CD8-positive, alpha-beta memory T cell (primary cell): ENCODE measurements at regions of chr10 and their contacts with region 1.

Region 1: DNA sequence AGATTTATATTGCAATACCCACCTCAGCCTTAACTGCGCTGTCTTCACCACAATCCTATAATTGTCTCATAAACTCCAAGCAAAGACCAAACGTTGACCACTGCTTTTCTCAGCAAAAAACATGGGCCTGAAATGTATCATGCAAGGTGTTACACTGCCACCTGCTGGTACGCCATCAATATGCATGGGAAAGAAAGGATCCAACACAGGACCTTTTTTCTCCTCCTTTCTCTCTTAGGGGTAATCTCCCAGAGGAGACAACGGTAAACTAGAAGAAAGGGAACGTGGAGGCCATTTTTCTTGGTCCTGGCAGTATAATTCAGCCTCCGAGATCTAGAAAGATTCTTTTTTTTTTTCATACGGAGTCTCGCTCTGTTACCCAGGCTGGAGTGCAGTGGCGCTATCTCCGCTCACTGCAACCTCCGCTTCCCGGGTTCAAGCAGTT is 79.1 kb upstream of the MPP7 start:
- DNase-seq: peak; percentile 74 to 88 (median 78)
- H3K4me3 ChIP-seq: no peak overlapping the region
- H3K4me3 Mint-ChIP-seq: no peak overlapping the region
- H3K27ac ChIP-seq: no peak overlapping the region
- H3K27ac Mint-ChIP-seq: peak overlapping the region in 3 of 8 donors; percentile 15 to 41 (median 20)
- H3K4me1 ChIP-seq: peaks cover 16% of the 10 kb centered on the region
- H3K4me1 Mint-ChIP-seq: peaks cover 7 to 24% (median 20%) of the 10 kb centered on the region in 3 donors
- H3K27me3 ChIP-seq: no peaks in the 10 kb centered on the region
- H3K27me3 Mint-ChIP-seq: peaks cover 6 to 13% of the 10 kb centered on the region in 2 donors

Region 2: GRCh38 chr10:28250782-28251181 is 131.1 kb before region 1 on chr10:
- CTCF ChIA-PET with region 1: interaction called, 21 read pairs
- POLR2A ChIA-PET with region 1: no interaction called
- DNase-seq: peak in 2 of 5 donors; percentile 6 to 24
- H3K4me3 ChIP-seq: no peak overlapping the region
- H3K4me3 Mint-ChIP-seq: no peak overlapping the region
- H3K27ac ChIP-seq: no peak overlapping the region
- H3K27ac Mint-ChIP-seq: no peak overlapping the region
- H3K4me1 ChIP-seq: no peaks in the 10 kb centered on the region
- H3K4me1 Mint-ChIP-seq: peaks cover 10 to 32% (median 24%) of the 10 kb centered on the region in 3 donors
- H3K27me3 ChIP-seq: no peaks in the 10 kb centered on the region
- H3K27me3 Mint-ChIP-seq: no peaks in the 10 kb centered on the region

Region 3: GRCh38 chr10:28293241-28294154 is 88.4 kb before region 1 on chr10:
- CTCF ChIA-PET with region 1: interaction called, 23 read pairs
- POLR2A ChIA-PET with region 1: no interaction called
- DNase-seq: no peak
- H3K4me3 ChIP-seq: no peak overlapping the region
- H3K4me3 Mint-ChIP-seq: peak overlapping the region in 1 of 7 donors; percentile 2
- H3K27ac ChIP-seq: no peak overlapping the region
- H3K27ac Mint-ChIP-seq: no peak overlapping the region
- H3K4me1 ChIP-seq: peaks cover 29% of the 10 kb centered on the region
- H3K4me1 Mint-ChIP-seq: peaks cover 37 to 71% (median 64%) of the 10 kb centered on the region in 3 donors
- H3K27me3 ChIP-seq: no peaks in the 10 kb centered on the region
- H3K27me3 Mint-ChIP-seq: no peaks in the 10 kb centered on the region

Region 4: DNA sequence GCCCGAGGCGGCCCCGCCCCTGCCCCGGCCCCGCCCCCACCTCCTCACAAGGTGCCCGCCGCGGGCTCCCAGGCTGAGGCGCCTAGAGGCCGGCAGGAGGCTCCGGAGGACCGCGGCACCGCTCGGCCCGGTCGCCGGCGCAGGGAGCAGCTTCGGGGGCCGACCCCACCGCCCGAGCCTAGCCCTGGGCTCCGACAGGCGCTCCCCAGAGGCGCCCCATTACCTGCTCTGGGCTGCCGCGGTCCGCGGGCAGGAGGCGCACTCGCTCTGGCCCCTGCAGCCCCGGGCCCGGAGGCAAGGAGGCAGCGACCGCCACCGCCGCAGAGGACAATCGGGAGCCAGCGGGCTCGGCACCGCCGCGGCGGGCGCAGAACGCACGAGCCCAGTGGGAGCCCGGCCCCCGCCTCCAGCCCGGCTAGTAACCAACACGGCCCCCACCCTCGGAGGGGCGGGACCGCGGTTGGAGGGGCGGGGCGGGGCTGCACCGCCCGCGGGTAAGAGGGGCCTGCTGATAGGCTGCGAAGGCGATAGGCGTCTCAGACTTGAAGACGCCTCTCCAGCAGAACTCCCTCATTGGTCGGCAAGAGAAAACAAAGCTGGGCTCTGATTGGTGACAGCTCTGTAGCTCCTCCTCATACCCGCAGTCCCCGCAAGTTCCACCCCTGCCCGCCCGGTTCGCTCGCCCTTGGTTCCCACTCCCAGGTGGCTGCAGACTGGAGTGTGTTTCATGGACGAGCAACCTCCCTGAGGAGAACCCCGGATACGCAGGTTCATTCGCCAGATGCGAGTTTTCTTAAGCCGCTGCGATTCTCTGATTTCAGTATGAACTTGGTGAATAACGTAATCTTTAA is 79.1 kb before region 1 on chr10 and contains the start of gene MPP7:
- CTCF ChIA-PET with region 1: interaction called, 121 read pairs
- POLR2A ChIA-PET with region 1: interaction called, 17 read pairs
- DNase-seq: peak; percentile 94 to 98 (median 97)
- H3K4me3 ChIP-seq: peak within 1 kb of the TSS; percentile 89
- H3K4me3 Mint-ChIP-seq: peak within 1 kb of the TSS; percentile 92 to 97 (median 95)
- H3K27ac ChIP-seq: peak within 1 kb of the TSS; percentile 60
- H3K27ac Mint-ChIP-seq: peak within 1 kb of the TSS; percentile 55 to 95 (median 90)
- H3K4me1 ChIP-seq: peaks cover 40% of the 10 kb centered on the region
- H3K4me1 Mint-ChIP-seq: peaks cover 48 to 82% (median 59%) of the 10 kb centered on the region in 3 donors
- H3K27me3 ChIP-seq: no peaks in the 10 kb centered on the region
- H3K27me3 Mint-ChIP-seq: peaks cover 0 to 2% of the 10 kb centered on the region in 2 donors
- total RNA-seq, gene MPP7: 6.6 to 7.9 TPM

Region 5: GRCh38 chr10:28334296-28334695 is 47.6 kb before region 1 on chr10:
- CTCF ChIA-PET with region 1: interaction called, 92 read pairs
- POLR2A ChIA-PET with region 1: interaction called, 17 read pairs
- DNase-seq: peak in 4 of 5 donors; percentile 50 to 92 (median 84)
- H3K4me3 ChIP-seq: peak overlapping the region; percentile 63
- H3K4me3 Mint-ChIP-seq: peak overlapping the region; percentile 91 to 98 (median 97)
- H3K27ac ChIP-seq: peak overlapping the region; percentile 99
- H3K27ac Mint-ChIP-seq: peak overlapping the region; percentile 100
- H3K4me1 ChIP-seq: peaks cover 58% of the 10 kb centered on the region
- H3K4me1 Mint-ChIP-seq: peaks cover 53 to 74% (median 63%) of the 10 kb centered on the region in 3 donors
- H3K27me3 ChIP-seq: no peaks in the 10 kb centered on the region
- H3K27me3 Mint-ChIP-seq: peaks cover 0 to 2% of the 10 kb centered on the region in 2 donors

Region 6: GRCh38 chr10:28367929-28368484 is 13.9 kb before region 1 on chr10:
- CTCF ChIA-PET with region 1: interaction called, 11 read pairs
- POLR2A ChIA-PET with region 1: interaction called, 5 read pairs
- DNase-seq: peak; percentile 6 to 84 (median 77)
- H3K4me3 ChIP-seq: peak overlapping the region; percentile 19
- H3K4me3 Mint-ChIP-seq: peak overlapping the region; percentile 23 to 85 (median 74)
- H3K27ac ChIP-seq: peak overlapping the region; percentile 44
- H3K27ac Mint-ChIP-seq: peak overlapping the region; percentile 86 to 98 (median 94)
- H3K4me1 ChIP-seq: peaks cover 51% of the 10 kb centered on the region
- H3K4me1 Mint-ChIP-seq: peaks cover 36 to 53% (median 51%) of the 10 kb centered on the region in 3 donors
- H3K27me3 ChIP-seq: no peaks in the 10 kb centered on the region
- H3K27me3 Mint-ChIP-seq: no peaks in the 10 kb centered on the region

Region 7: GRCh38 chr10:28393966-28394568 is 12.1 kb after region 1 on chr10:
- CTCF ChIA-PET with region 1: interaction called, 43 read pairs
- POLR2A ChIA-PET with region 1: no interaction called
- DNase-seq: peak; percentile 42 to 69 (median 48)
- H3K4me3 ChIP-seq: no peak overlapping the region
- H3K4me3 Mint-ChIP-seq: peak overlapping the region in 1 of 7 donors; percentile 11
- H3K27ac ChIP-seq: no peak overlapping the region
- H3K27ac Mint-ChIP-seq: no peak overlapping the region
- H3K4me1 ChIP-seq: no peaks in the 10 kb centered on the region
- H3K4me1 Mint-ChIP-seq: peaks cover 4 to 6% (median 5%) of the 10 kb centered on the region in 3 donors
- H3K27me3 ChIP-seq: no peaks in the 10 kb centered on the region
- H3K27me3 Mint-ChIP-seq: peaks cover 6 to 7% of the 10 kb centered on the region in 2 donors